ENCODE measurements at regions of chr2 and their contacts with region 1.

Region 1: GRCh38 chr2:143034292-143035074 is 94.7 kb upstream of the ARHGAP15 start:
- DNase-seq: peak; percentile 78
- H3K4me3 Mint-ChIP-seq: no peak overlapping the region
- H3K27ac Mint-ChIP-seq: no peak overlapping the region
- H3K4me1 Mint-ChIP-seq: peaks cover 14% of the 10 kb centered on the region
- H3K27me3 Mint-ChIP-seq: peaks cover 7% of the 10 kb centered on the region

Region 2: GRCh38 chr2:143051465-143051864 is 17.0 kb after region 1 on chr2:
- CTCF ChIA-PET with region 1: interaction called, 10 read pairs
- intact Hi-C with region 1: no loop called
- DNase-seq: no peak
- H3K4me3 Mint-ChIP-seq: no peak overlapping the region
- H3K27ac Mint-ChIP-seq: no peak overlapping the region
- H3K4me1 Mint-ChIP-seq: peaks cover 3% of the 10 kb centered on the region
- H3K27me3 Mint-ChIP-seq: no peaks in the 10 kb centered on the region

Region 3: DNA sequence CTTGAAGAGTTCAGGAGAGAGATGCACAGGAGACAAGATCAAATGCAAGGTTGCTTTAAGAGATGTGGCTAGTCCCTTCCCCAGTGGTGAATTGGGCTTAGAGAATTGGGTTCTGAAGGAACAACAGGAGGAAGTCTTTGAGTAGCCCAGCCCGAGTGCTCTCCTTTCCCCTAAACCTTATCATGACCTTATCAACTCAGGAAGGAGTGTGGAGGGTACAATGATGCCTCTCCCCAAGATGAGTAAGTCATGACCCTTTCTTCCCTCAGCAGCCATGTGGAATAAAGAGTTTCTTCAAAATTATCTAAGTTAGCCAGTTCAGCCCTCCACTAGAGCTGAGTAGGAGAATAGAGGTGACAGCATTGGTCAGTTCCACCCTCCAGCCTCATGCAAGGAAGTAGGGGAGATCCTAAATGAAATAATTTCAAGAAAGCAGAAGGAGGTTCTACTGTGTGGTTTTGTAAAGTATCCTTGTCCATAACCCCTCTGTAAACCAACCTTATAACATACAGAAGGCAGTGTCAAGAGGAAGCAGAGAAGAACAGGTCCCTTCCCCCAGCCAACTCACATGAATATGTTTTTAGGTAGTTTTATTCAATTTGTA is 183.1 kb after region 1 on chr2:
- CTCF ChIA-PET with region 1: interaction called, 5 read pairs
- intact Hi-C with region 1: loop called (anchors 1 kb)
- DNase-seq: no peak
- H3K4me3 Mint-ChIP-seq: no peak overlapping the region
- H3K27ac Mint-ChIP-seq: peak overlapping the region; percentile 48
- H3K4me1 Mint-ChIP-seq: peaks cover 32% of the 10 kb centered on the region
- H3K27me3 Mint-ChIP-seq: no peaks in the 10 kb centered on the region

Region 4: DNA sequence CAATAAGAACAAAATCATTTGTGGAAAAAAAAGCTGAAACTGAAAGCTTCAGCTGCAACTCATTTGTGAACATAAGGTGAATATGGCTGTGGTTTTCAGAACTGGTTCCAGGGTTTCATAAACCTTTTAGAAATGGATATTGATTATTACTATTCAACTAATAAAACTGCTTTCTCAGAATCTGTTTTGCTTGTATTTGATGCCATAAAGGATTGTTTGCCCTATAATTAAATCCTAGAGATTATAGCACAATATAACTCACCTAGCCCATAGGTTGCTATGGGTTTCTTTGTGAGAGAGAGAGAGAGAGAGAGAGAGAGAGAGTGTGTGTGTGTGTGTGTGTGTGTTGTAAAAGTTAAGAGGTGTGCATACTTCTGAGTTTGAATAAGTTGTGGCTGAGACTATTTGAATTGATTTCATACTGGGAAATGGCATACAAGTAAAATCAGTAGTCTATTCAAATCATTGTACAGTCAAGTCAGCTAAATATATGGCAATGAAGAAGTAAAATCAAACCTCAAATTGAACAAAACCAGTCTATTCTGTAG is 433.9 kb after region 1 on chr2:
- CTCF ChIA-PET with region 1: no interaction called
- intact Hi-C with region 1: loop called (anchors 5 kb)
- DNase-seq: no peak
- H3K4me3 Mint-ChIP-seq: peak overlapping the region; percentile 12
- H3K27ac Mint-ChIP-seq: peak overlapping the region; percentile 50
- H3K4me1 Mint-ChIP-seq: peaks cover 28% of the 10 kb centered on the region
- H3K27me3 Mint-ChIP-seq: no peaks in the 10 kb centered on the region

Region 5: GRCh38 chr2:143730155-143730952 is 695.9 kb after region 1 on chr2:
- CTCF ChIA-PET with region 1: no interaction called
- intact Hi-C with region 1: loop called (anchors 10 kb)
- DNase-seq: peak; percentile 44
- H3K4me3 Mint-ChIP-seq: no peak overlapping the region
- H3K27ac Mint-ChIP-seq: peak overlapping the region; percentile 61
- H3K4me1 Mint-ChIP-seq: peaks cover 32% of the 10 kb centered on the region
- H3K27me3 Mint-ChIP-seq: no peaks in the 10 kb centered on the region

Measured in activated naive CD4-positive, alpha-beta T cell treated with anti-CD3 and anti-CD28 coated beads for 36 hours (primary cell).